Left lung (tissue), 14 donors: ENCODE measurements at regions of chr18 and their contacts with region 1.

Region 1: DNA sequence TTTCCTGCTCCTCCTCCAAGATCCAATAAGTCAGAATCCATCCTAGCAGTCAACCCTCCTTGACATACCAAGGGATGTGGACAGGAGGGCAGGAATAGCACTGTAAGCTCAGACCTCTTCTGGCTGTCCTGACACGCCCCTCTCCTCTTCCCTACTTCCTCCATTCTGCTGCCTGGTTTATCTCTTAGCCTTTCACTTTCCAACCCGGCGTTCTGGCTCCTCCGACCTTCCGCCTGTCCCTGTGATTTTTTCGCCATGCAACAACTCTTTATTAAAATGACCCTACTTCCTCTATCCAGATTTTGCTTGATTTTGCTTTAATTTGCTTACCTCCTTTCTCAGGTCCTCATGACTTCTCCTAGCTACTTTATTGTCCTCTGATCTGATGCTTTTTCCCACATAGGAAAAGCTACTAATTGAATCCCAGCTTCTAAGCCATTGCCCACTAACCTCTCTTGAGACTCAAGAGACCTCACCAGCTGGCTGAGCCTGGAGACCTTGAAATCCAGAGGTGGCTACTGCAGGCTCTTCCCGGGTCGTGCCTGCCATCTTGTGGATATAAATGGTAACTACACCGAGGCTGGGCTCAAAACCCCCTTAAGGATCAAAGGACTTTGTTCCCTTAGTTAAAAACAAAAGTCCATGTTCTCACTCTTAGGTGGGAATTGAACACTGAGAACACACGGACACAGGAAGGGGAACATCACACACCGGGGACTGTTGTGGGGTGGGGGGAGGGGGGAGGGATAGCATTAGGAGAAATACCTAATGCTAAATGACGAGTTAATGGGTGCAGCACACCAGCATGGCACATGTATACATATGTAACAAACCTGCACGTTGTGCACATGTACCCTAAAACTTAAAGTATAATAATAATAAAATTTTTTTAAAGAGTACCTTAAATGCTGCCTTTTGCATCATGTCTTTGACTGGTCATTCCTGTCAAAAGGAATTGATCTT is 139.4 kb downstream of the AKAIN1 start:
- DNase-seq: peak in 3 of 4 donors; percentile 34 to 66 (median 49)
- ATAC-seq: peak; percentile 98
- H3K4me3 ChIP-seq: no peak overlapping the region
- H3K27ac ChIP-seq: no peak overlapping the region
- H3K4me1 ChIP-seq: peaks cover 0 to 11% of the 10 kb centered on the region in 2 donors
- H3K27me3 ChIP-seq: no peaks in the 10 kb centered on the region
- CTCF ChIP-seq: peak; percentile 66 to 75

Region 2: DNA sequence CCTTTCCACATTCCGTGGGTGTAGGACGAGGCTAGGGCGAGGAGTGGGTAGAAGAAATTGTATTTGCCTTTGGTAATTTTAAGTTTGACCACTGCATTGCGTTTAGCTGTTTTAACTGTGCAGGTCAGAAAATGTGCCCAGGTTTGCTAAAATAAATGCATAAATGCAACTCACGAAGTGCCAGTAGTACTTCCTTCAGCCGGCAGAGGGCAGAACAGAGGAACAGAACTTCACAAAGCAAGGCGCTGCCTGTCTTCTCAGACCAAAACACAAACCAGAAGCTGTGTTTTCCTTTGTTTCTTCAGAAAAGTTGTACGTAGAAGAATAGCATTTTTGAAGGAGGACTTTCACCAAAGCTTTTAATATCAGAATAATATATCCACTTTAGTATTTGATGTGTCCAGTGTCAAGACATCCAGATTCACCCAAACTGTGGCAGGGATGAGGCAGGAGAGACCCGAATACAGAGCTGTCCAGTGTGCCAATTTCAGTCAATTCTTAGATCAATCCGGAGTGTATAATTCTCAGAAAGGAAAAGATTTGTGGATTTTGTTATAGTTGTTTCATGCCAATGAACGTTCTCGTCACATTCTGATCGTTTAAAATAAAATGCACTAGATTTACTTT is 951.1 kb before region 1 on chr18:
- intact Hi-C with region 1: loop called in 1 of 2 experiments (anchors 10 kb)
- DNase-seq: peak in 3 of 4 donors; percentile 36 to 68 (median 48)
- ATAC-seq: peak; percentile 91
- H3K4me3 ChIP-seq: no peak overlapping the region
- H3K27ac ChIP-seq: no peak overlapping the region
- H3K4me1 ChIP-seq: no peaks in the 10 kb centered on the region
- H3K27me3 ChIP-seq: no peaks in the 10 kb centered on the region
- CTCF ChIP-seq: peak; percentile 70 to 73

Region 3: GRCh38 chr18:4236940-4237663 is 820.6 kb before region 1 on chr18:
- intact Hi-C with region 1: no loop called
- DNase-seq: no peak
- ATAC-seq: no peak
- H3K4me3 ChIP-seq: no peak overlapping the region
- H3K27ac ChIP-seq: no peak overlapping the region
- H3K4me1 ChIP-seq: no peaks in the 10 kb centered on the region
- H3K27me3 ChIP-seq: no peaks in the 10 kb centered on the region
- CTCF ChIP-seq: no peak

Region 4: DNA sequence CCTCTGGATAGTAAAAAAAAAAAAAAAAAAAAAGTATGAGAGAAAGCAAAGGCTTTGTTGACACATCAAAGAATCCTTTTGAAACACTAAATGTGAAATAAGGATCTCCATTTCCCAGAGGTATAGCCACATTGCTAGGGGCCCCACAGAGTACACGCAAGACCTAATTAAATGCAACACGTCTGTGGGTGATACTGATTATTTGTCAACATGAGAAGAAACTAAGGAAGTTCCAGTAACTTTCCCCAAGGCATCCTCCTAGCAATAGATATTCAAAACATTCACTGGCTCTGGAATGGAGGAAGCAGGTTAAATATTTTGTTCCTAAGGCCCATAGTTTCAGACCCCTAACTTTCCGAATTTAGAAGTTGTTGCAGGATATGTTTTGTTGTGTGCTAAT is 510.7 kb after region 1 on chr18:
- intact Hi-C with region 1: no loop called
- DNase-seq: no peak
- ATAC-seq: no peak
- H3K4me3 ChIP-seq: no peak overlapping the region
- H3K27ac ChIP-seq: no peak overlapping the region
- H3K4me1 ChIP-seq: peaks cover 0 to 10% of the 10 kb centered on the region in 2 donors
- H3K27me3 ChIP-seq: no peaks in the 10 kb centered on the region
- CTCF ChIP-seq: no peak